CD4-positive, alpha-beta T cell (primary cell): ENCODE measurements at regions of chr15 and their contacts with region 1.

Region 1: GRCh38 chr15:66685638-66686150 is 16.3 kb upstream of the SMAD6 start:
- DNase-seq: no peak
- ATAC-seq: no peak
- H3K4me3 ChIP-seq: no peak overlapping the region
- H3K4me3 Mint-ChIP-seq: no peak overlapping the region
- H3K27ac ChIP-seq: no peak overlapping the region
- H3K27ac Mint-ChIP-seq: no peak overlapping the region
- H3K4me1 ChIP-seq: no peaks in the 10 kb centered on the region
- H3K4me1 Mint-ChIP-seq: no peaks in the 10 kb centered on the region
- H3K27me3 ChIP-seq: no peaks in the 10 kb centered on the region
- H3K27me3 Mint-ChIP-seq: no peaks in the 10 kb centered on the region
- CTCF ChIP-seq: peak; percentile 32

Region 2: DNA sequence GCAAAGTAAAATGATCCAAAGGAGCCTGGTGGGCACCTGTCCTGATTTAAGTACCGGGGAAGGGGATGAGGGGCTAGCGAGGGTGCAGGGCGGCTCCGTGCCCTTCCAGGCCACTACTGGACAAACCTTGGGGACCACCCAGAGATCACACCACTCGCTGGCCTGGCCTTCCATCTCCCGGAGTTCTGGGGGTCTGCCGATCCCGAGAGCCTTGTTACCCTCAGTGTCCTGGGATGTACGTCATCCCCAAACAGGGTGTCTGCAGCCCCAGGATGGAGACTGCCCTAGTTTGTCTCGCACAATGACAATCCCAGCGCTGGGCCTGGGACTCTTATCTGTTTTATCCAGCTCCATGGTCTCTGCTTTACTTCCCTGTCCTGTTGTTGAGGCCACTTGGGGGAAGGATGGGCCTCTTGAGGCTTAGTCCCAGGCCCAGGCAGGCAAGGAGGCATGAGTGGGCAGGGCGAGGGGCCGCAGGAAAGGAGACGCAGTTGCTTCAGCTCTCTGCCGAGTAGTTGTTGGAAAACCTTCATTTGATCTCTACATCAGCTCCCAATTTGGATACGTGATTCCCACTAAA is 33.7 kb after region 1 on chr15:
- CTCF ChIA-PET with region 1: no interaction called
- POLR2A ChIA-PET with region 1: no interaction called
- intact Hi-C with region 1: loop called in 1 of 2 experiments (anchors 1 kb)
- DNase-seq: no peak
- ATAC-seq: no peak
- H3K4me3 ChIP-seq: no peak overlapping the region
- H3K4me3 Mint-ChIP-seq: no peak overlapping the region
- H3K27ac ChIP-seq: no peak overlapping the region
- H3K27ac Mint-ChIP-seq: no peak overlapping the region
- H3K4me1 ChIP-seq: peaks cover 14% of the 10 kb centered on the region
- H3K4me1 Mint-ChIP-seq: no peaks in the 10 kb centered on the region
- H3K27me3 ChIP-seq: peaks cover 0 to 2% of the 10 kb centered on the region in 2 experiments
- H3K27me3 Mint-ChIP-seq: no peaks in the 10 kb centered on the region
- CTCF ChIP-seq: no peak